Caco-2 (cell line): ENCODE measurements at regions of chr7 and their contacts with region 1.

Region 1: DNA sequence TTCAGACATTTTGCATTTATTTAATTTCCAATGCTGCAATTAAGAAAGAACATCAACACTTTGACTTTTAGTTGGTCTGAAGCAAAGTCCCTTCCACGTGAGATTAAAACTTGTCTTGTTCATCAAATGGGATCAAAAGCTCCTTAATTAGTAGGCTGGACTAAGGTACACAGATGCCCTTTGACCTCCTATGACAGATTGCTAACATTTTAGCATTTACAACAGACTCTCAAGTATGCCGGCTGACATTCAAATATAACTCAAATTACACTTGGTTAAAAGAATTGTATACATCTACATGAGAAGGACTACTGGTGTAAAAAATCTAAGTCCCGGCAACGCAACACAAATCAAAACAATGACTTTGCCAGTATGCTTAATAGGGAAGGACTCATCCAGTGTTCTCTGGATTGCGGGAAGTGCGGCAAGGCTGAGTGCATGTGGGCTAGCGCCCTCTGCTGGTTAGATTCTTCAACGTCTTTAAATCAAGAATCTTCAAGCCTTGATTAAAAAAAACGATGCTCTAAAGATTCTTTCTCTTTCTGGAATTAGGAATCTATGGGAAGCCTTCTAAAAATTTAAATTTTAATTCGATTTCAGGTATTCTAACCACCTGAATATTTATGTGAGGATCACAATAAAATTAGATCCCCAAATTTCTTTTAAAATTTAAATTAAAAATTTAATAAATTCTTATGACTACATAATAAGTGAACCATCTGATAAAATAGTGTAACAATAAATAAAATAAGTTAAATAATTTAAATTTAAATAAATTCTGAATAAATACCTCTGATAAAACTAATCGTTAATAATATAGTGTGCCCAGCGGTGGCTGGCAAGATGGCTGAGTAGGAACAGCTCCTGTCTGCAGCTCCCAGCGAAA is 444.7 kb downstream of the DGKB start:
- DNase-seq: peak; percentile 56 to 70
- H3K4me3 ChIP-seq: no peak overlapping the region
- H3K4me3 Mint-ChIP-seq: no peak overlapping the region
- H3K27ac Mint-ChIP-seq: no peak overlapping the region
- H3K4me1 ChIP-seq: no peaks in the 10 kb centered on the region
- H3K4me1 Mint-ChIP-seq: no peaks in the 10 kb centered on the region
- H3K27me3 ChIP-seq: no peaks in the 10 kb centered on the region
- H3K27me3 Mint-ChIP-seq: no peaks in the 10 kb centered on the region
- CTCF ChIP-seq: peak; percentile 70 to 79

Region 2: DNA sequence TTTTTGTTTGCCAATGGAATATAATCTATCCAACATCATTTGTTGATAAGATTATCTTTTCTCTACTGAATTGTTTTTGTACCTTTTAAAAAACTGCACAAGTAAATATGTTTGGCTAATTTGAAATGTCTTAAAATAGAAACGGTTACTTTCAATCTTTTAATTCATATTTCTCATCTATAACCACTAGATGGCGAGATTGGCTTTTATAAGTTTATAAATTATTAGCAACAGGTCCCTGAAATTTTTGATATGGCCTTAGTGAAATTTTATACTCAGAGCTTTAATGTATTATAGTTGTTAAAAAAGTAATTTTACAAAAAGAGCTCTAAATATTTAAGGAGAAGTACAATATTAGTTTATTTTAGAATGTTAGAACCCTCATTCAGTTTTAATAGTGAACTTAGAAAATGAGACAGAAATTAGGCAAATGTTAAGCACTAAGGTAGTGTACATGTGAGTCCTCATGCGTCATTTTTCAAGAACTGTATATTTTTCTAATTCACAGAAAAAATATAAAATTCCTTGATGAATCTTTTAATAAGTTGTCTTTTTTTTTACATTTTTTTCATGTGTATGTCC is 1177.9 kb before region 1 on chr7:
- CTCF ChIA-PET with region 1: no interaction called
- POLR2A ChIA-PET with region 1: no interaction called
- intact Hi-C with region 1: loop called (anchors 5 kb)
- DNase-seq: no peak
- H3K4me3 ChIP-seq: no peak overlapping the region
- H3K4me3 Mint-ChIP-seq: no peak overlapping the region
- H3K27ac Mint-ChIP-seq: no peak overlapping the region
- H3K4me1 ChIP-seq: no peaks in the 10 kb centered on the region; the same call in 1 of the 2 replicates
- H3K4me1 Mint-ChIP-seq: no peaks in the 10 kb centered on the region
- H3K27me3 ChIP-seq: no peaks in the 10 kb centered on the region
- H3K27me3 Mint-ChIP-seq: no peaks in the 10 kb centered on the region
- CTCF ChIP-seq: peak in 1 of 2 experiments; percentile 15

Region 3: GRCh38 chr7:13742811-13743210 is 715.0 kb before region 1 on chr7:
- CTCF ChIA-PET with region 1: no interaction called
- POLR2A ChIA-PET with region 1: no interaction called
- intact Hi-C with region 1: loop called (anchors 5 kb)
- DNase-seq: peak; percentile 38 to 48
- H3K4me3 ChIP-seq: no peak overlapping the region
- H3K4me3 Mint-ChIP-seq: no peak overlapping the region
- H3K27ac Mint-ChIP-seq: no peak overlapping the region
- H3K4me1 ChIP-seq: peaks cover 12% of the 10 kb centered on the region; the same call in 1 of the 2 replicates
- H3K4me1 Mint-ChIP-seq: peaks cover 6% of the 10 kb centered on the region
- H3K27me3 ChIP-seq: no peaks in the 10 kb centered on the region
- H3K27me3 Mint-ChIP-seq: no peaks in the 10 kb centered on the region
- CTCF ChIP-seq: peak; percentile 48 to 49

Region 4: DNA sequence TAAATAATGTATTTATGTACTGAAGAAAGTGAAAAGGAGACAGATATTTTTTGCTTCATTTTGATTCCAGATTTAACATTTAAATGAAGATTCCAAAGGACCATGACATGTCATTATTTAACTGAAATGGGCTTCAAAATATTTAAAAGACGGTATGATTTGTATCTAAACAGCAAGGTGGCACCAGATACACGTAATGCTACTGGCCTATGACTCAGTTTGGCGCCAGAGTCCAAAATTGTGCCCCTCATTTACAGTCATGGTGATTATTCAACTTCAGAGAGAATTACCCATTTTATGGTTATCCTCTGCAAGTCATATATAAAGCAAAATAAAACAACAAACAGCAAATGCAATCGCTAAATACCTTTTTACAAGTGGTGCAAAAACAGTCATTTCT is 562.9 kb before region 1 on chr7:
- CTCF ChIA-PET with region 1: no interaction called
- POLR2A ChIA-PET with region 1: no interaction called
- intact Hi-C with region 1: loop called (anchors 2 kb)
- DNase-seq: no peak
- H3K4me3 ChIP-seq: no peak overlapping the region
- H3K4me3 Mint-ChIP-seq: no peak overlapping the region
- H3K27ac Mint-ChIP-seq: no peak overlapping the region
- H3K4me1 ChIP-seq: no peaks in the 10 kb centered on the region
- H3K4me1 Mint-ChIP-seq: peaks cover 6% of the 10 kb centered on the region
- H3K27me3 ChIP-seq: no peaks in the 10 kb centered on the region
- H3K27me3 Mint-ChIP-seq: peaks cover 8% of the 10 kb centered on the region
- CTCF ChIP-seq: no peak

Region 5: GRCh38 chr7:13990984-13991790 is 466.6 kb before region 1 on chr7:
- CTCF ChIA-PET with region 1: no interaction called
- POLR2A ChIA-PET with region 1: no interaction called
- intact Hi-C with region 1: loop called (anchors 10 kb)
- DNase-seq: peak; percentile 92 to 93
- H3K4me3 ChIP-seq: peak overlapping the region; percentile 43
- H3K4me3 Mint-ChIP-seq: no peak overlapping the region
- H3K27ac Mint-ChIP-seq: no peak overlapping the region
- H3K4me1 ChIP-seq: 0 out of 2 replicates have a peak, but pooled peaks cover 3% of the 10 kb centered on the region
- H3K4me1 Mint-ChIP-seq: no peaks in the 10 kb centered on the region
- H3K27me3 ChIP-seq: no peaks in the 10 kb centered on the region
- H3K27me3 Mint-ChIP-seq: peaks cover under 1% of the 10 kb centered on the region
- CTCF ChIP-seq: no peak

Region 6: GRCh38 chr7:14144538-14144937 is 313.3 kb before region 1 on chr7:
- CTCF ChIA-PET with region 1: no interaction called
- POLR2A ChIA-PET with region 1: no interaction called
- intact Hi-C with region 1: loop called (anchors 10 kb)
- DNase-seq: no peak
- H3K4me3 ChIP-seq: no peak overlapping the region
- H3K4me3 Mint-ChIP-seq: no peak overlapping the region
- H3K27ac Mint-ChIP-seq: no peak overlapping the region
- H3K4me1 ChIP-seq: no peaks in the 10 kb centered on the region
- H3K4me1 Mint-ChIP-seq: no peaks in the 10 kb centered on the region
- H3K27me3 ChIP-seq: no peaks in the 10 kb centered on the region
- H3K27me3 Mint-ChIP-seq: peaks cover 6% of the 10 kb centered on the region
- CTCF ChIP-seq: no peak

Region 7: DNA sequence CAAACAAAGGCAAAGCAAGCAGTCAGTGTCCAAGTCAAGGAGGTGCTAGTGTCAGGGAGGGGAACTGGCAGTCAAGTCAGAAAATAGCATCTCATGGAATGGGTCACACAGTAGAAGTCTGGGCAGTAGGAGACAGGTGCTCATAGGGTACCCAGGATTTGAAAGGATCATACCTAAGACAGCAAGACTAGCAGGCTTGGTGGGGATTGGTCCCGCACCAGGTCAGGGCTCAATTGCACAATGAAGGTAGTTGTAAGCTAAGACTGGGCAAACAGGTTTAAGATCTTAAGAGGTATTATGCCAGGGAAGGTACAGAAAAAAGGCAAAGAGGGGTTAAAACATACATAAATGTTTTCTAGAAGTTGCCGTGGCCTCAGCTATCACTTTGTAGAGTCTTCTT is 286.9 kb before region 1 on chr7:
- CTCF ChIA-PET with region 1: no interaction called
- POLR2A ChIA-PET with region 1: no interaction called
- intact Hi-C with region 1: no loop called
- DNase-seq: no peak
- H3K4me3 ChIP-seq: no peak overlapping the region
- H3K4me3 Mint-ChIP-seq: no peak overlapping the region
- H3K27ac Mint-ChIP-seq: no peak overlapping the region
- H3K4me1 ChIP-seq: no peaks in the 10 kb centered on the region
- H3K4me1 Mint-ChIP-seq: no peaks in the 10 kb centered on the region
- H3K27me3 ChIP-seq: no peaks in the 10 kb centered on the region
- H3K27me3 Mint-ChIP-seq: no peaks in the 10 kb centered on the region
- CTCF ChIP-seq: no peak

Region 8: DNA sequence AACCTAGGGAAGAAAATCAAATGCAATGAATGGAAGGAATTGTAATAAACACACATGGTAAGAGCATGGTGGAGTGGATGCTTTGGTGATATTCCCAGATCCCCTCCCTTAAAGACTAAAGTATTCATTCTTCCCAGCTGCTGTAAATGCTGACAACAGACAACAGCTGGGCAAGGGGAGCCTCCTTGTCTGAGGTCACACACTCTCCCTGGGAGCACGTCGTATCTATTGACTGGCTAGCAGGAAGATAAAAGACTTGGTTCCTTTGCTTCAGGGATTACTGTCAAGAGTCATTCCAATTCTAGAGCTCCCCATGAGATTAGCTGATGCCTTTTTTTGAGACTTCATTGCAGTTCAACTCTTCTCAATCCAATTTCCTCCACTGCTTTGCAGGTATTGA is 24.9 kb before region 1 on chr7:
- CTCF ChIA-PET with region 1: no interaction called
- POLR2A ChIA-PET with region 1: no interaction called
- intact Hi-C with region 1: loop called (anchors 1 kb)
- DNase-seq: no peak
- H3K4me3 ChIP-seq: no peak overlapping the region
- H3K4me3 Mint-ChIP-seq: no peak overlapping the region
- H3K27ac Mint-ChIP-seq: no peak overlapping the region
- H3K4me1 ChIP-seq: no peaks in the 10 kb centered on the region
- H3K4me1 Mint-ChIP-seq: no peaks in the 10 kb centered on the region
- H3K27me3 ChIP-seq: no peaks in the 10 kb centered on the region
- H3K27me3 Mint-ChIP-seq: no peaks in the 10 kb centered on the region
- CTCF ChIP-seq: no peak